ENCODE measurements at regions of chr12 and their contacts with region 1.

Region 1: DNA sequence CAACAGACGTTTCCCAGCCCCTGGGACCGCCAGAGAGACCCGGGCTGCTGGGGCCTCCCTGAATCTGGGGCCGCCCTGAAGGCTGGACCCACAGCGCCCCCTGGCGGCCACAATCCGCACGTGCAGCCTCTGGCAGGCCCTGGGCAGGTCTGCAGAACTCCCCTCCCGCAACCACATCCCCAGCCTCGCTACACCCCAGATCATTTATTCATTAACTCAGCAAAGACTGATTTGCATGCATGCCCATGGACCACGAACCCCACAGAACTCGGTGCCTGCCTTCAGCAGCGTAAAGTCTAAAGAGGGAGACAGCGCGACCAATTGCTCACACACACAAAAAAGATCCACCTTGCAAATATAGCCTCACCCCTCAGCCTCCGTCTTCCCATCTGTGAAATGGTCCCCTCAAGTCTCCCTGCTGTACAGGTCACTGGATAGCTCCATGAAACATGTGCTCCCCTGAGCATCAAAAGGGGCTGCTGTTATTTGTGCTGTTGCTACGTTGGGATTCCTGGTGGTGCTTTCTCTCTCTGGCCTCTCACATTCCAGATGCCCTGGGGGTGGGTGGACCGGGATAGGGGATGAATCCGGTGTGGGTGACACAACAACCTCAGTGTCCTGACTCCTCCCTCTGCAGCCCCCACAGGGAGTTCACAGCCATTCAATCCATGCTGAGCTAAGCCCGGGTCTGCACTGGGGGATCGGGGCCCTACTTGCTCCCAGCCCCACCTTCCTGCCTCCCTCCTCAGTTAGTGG is 96.4 kb downstream of the SCARB1 start:
- DNase-seq: peak; percentile 82
- ATAC-seq: peak; percentile 86
- H3K4me3 Mint-ChIP-seq: no peak overlapping the region
- H3K27ac Mint-ChIP-seq: peak overlapping the region; percentile 72
- H3K4me1 Mint-ChIP-seq: peaks cover 15% of the 10 kb centered on the region
- H3K27me3 Mint-ChIP-seq: peaks cover 9% of the 10 kb centered on the region
- CTCF ChIP-seq: peak; percentile 85

Region 2: DNA sequence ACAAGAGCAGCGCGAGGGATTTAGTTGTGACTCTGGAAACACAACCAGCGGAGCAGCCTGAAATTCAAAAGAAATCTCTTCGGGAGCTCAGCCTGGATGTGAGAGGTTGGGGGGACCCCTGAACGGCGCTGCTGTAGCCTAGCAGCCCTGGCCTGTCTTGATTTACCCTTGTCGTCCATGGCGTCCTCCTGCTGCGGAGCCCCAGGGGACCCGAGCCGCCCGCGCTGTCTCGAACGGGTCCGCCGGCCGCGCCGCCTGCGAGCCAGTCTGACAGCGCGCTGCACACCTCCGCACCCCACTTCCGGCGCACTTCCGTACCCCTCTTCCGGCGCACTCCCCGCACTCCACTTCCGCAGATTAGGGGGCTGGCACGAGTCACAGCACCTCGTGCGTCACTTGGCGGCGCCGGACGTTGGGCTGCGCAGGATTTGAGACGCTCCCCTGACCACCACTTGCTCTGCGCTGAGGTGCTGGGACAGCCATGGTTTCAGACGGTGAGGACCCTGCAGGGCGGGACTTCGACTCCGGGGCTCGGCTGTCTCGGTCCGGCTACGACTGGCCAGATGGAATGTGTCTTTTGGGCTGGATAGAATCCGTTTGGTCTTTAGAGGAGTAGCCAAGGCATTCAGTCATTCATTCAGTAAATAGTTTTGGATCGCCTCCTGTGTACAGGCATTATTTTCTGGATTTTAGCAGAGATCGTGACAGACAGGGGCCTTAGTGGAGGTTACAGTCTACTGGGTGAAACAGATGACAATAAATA is 1133.7 kb before region 1 on chr12 and contains the starts of genes EIF2B1 and GTF2H3:
- CTCF ChIA-PET with region 1: no interaction called
- POLR2A ChIA-PET with region 1: no interaction called
- intact Hi-C with region 1: loop called (anchors 5 kb)
- DNase-seq: peak; percentile 96
- ATAC-seq: peak; percentile 98
- H3K4me3 Mint-ChIP-seq: peak within 1 kb of the TSS; percentile 96
- H3K27ac Mint-ChIP-seq: peak within 1 kb of the TSS; percentile 93
- H3K4me1 Mint-ChIP-seq: peaks cover 24% of the 10 kb centered on the region
- H3K27me3 Mint-ChIP-seq: no peaks in the 10 kb centered on the region
- CTCF ChIP-seq: no peak
- total RNA-seq, gene EIF2B1: 67.3 and 79.7 TPM in 2 replicates
- total RNA-seq, gene GTF2H3: 33.8 and 36.2 TPM in 2 replicates

Region 3: GRCh38 chr12:124036674-124037109 is 730.6 kb before region 1 on chr12:
- CTCF ChIA-PET with region 1: interaction called, 44 read pairs
- POLR2A ChIA-PET with region 1: interaction called, 5 read pairs
- intact Hi-C with region 1: loop called (anchors 1 kb)
- DNase-seq: peak; percentile 21
- ATAC-seq: peak; percentile 54
- H3K4me3 Mint-ChIP-seq: no peak overlapping the region
- H3K27ac Mint-ChIP-seq: no peak overlapping the region
- H3K4me1 Mint-ChIP-seq: no peaks in the 10 kb centered on the region
- H3K27me3 Mint-ChIP-seq: peaks cover 5% of the 10 kb centered on the region
- CTCF ChIP-seq: peak; percentile 96

Region 4: GRCh38 chr12:124347716-124348357 is 419.4 kb before region 1 on chr12:
- CTCF ChIA-PET with region 1: interaction called, 6 read pairs
- POLR2A ChIA-PET with region 1: no interaction called
- intact Hi-C with region 1: loop called (anchors 1 kb)
- DNase-seq: peak; percentile 25
- ATAC-seq: peak; percentile 47
- H3K4me3 Mint-ChIP-seq: no peak overlapping the region
- H3K27ac Mint-ChIP-seq: no peak overlapping the region
- H3K4me1 Mint-ChIP-seq: no peaks in the 10 kb centered on the region
- H3K27me3 Mint-ChIP-seq: no peaks in the 10 kb centered on the region
- CTCF ChIP-seq: no peak

Region 5: GRCh38 chr12:124466216-124467128 is 300.8 kb before region 1 on chr12:
- CTCF ChIA-PET with region 1: interaction called, 6 read pairs
- POLR2A ChIA-PET with region 1: no interaction called
- intact Hi-C with region 1: loop called (anchors 5 kb)
- DNase-seq: peak; percentile 79
- ATAC-seq: peak; percentile 97
- H3K4me3 Mint-ChIP-seq: peak overlapping the region; percentile 71
- H3K27ac Mint-ChIP-seq: peak overlapping the region; percentile 77
- H3K4me1 Mint-ChIP-seq: peaks cover 55% of the 10 kb centered on the region
- H3K27me3 Mint-ChIP-seq: no peaks in the 10 kb centered on the region
- CTCF ChIP-seq: no peak

Region 6: GRCh38 chr12:124713436-124714082 is 53.7 kb before region 1 on chr12:
- CTCF ChIA-PET with region 1: no interaction called
- POLR2A ChIA-PET with region 1: no interaction called
- intact Hi-C with region 1: loop called (anchors 1 kb)
- DNase-seq: peak; percentile 46
- ATAC-seq: peak; percentile 90
- H3K4me3 Mint-ChIP-seq: peak overlapping the region; percentile 52
- H3K27ac Mint-ChIP-seq: peak overlapping the region; percentile 77
- H3K4me1 Mint-ChIP-seq: peaks cover 19% of the 10 kb centered on the region
- H3K27me3 Mint-ChIP-seq: no peaks in the 10 kb centered on the region
- CTCF ChIP-seq: no peak

Measured in activated B cell treated with CpG ODN at 0.5 μM for 24 hours (primary cell).